A549 (cell line): ENCODE measurements at regions of chr20 and their contacts with region 1.

Region 1: DNA sequence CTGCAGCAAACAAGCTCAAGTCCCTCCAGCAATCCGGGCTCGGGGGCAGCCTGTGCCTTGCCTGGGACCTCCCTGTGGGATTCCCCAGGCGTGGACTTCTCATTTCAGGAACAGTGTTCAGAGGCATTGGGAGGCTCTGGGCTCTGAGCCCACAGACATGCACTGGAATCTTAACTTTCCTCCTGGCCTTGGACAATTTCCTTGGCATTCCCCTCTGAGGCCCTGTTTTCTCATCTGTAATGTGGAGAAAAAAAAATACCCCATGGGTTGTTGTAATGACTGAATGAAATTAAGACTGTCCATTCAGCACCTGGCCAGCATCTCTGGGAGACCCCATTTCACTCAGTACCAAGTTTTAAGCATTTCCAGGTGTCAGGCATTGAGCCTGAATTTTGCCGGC is 17.6 kb downstream of the BPIFB4 start:
- DNase-seq: no peak
- ATAC-seq: no peak
- H3K4me3 ChIP-seq: no peak overlapping the region
- H3K27ac ChIP-seq: no peak overlapping the region
- H3K4me1 ChIP-seq: no peaks in the 10 kb centered on the region
- CTCF ChIP-seq: no peak
- EP300 ChIP-seq: no peak
- POLR2A ChIP-seq: no peak
- RAD21 ChIP-seq: no peak

Region 2: GRCh38 chr20:32894026-32894483 is 202.9 kb before region 1 on chr20:
- CTCF ChIA-PET with region 1: interaction called, 23 read pairs
- POLR2A ChIA-PET with region 1: no interaction called
- DNase-seq: peak; percentile 41 to 57
- ATAC-seq: peak; percentile 67 to 91; a peak in 5 of 6 replicates
- H3K4me3 ChIP-seq: no peak overlapping the region
- H3K27ac ChIP-seq: no peak overlapping the region
- H3K4me1 ChIP-seq: no peaks in the 10 kb centered on the region
- CTCF ChIP-seq: peak; percentile 37; the same call in 2 of the 3 replicates
- EP300 ChIP-seq: no peak
- POLR2A ChIP-seq: no peak
- RAD21 ChIP-seq: peak in 1 of 2 experiments; percentile 44; a peak in 2 of 5 replicates

Region 3: GRCh38 chr20:33067806-33068205 is 29.2 kb before region 1 on chr20:
- CTCF ChIA-PET with region 1: interaction called, 16 read pairs
- POLR2A ChIA-PET with region 1: no interaction called
- DNase-seq: no peak
- ATAC-seq: no peak
- H3K4me3 ChIP-seq: no peak overlapping the region
- H3K27ac ChIP-seq: no peak overlapping the region
- H3K4me1 ChIP-seq: no peaks in the 10 kb centered on the region
- CTCF ChIP-seq: no peak
- EP300 ChIP-seq: no peak
- POLR2A ChIP-seq: no peak
- RAD21 ChIP-seq: no peak

Region 4: DNA sequence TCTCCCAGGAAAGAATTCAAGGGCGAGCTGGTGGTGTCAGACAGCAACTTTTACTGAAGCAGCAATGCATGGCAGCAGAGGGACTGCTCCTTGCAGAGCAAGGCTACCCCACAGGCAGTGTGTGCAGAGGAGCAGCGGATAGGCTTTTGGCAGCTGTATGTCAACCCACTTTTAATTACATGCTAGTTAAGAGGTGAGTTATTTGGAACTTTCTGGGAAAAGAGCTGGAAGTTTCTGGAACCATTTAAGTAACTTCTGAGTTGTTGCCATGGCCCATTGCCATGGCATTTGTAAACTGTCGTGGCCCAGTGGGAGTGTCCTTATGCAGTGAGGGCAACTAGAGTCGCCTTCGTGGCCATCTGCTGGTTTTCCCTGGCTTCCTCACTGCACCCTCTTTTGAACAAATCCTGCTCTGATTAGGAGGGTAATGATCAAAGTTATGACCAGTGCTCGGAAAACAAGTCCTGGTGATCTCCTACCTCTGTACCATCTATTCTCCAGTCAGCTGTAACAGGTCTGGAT is 16.4 kb after region 1 on chr20:
- CTCF ChIA-PET with region 1: interaction called, 11 read pairs
- POLR2A ChIA-PET with region 1: no interaction called
- DNase-seq: no peak
- ATAC-seq: peak in 1 of 2 experiments; percentile 39; a peak in 1 of 6 replicates
- H3K4me3 ChIP-seq: no peak overlapping the region
- H3K27ac ChIP-seq: no peak overlapping the region
- H3K4me1 ChIP-seq: no peaks in the 10 kb centered on the region
- CTCF ChIP-seq: no peak
- EP300 ChIP-seq: no peak
- POLR2A ChIP-seq: no peak
- RAD21 ChIP-seq: no peak